Activated B cell treated with CpG ODN at 0.5 μM for 24 hours (primary cell): ENCODE measurements at regions of chr11 and their contacts with region 1.

Region 1: DNA sequence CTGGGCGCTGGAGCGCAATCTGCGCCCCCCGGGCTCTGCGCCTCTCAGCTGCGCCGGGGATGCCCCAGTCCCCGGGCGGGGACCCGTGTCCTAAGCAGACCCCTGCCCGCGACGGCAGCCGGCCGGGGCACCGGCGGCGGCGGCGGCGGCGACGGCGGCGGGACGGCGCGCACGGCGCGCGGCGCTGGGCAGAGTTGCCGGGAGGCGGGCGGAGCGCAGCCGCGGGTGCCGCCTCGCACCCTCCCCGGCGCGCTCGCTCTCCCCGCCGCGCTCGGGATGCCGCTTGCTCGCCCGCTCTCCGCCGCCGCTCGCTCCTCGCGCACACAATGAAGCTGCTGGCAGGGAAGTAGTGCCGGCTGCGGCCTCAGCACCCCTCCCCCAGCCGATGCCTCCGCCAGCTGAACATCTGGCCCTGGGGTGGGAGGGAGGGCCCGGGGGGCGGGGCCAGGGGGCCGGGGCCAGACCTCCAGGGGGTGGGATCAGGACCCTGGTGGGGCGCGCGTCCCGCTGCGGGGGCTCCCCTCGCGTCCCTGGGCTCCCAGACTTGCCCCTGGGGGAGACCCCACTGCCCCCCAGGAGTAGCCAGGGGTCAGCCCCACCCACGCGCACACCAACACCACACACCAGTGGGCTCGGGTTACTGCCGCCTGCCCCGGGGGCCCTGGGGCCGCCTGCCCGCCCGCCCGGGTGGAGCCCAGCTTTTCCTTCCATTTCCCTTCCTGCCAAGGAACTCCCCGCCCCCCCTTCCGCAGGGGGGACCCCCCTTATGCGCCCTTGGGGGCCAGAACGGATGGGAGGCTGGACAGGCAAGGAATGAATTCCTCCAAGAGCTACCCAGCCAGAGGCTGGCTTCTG is at the start of gene RCOR2:
- DNase-seq: peak; percentile 58
- ATAC-seq: peak; percentile 74
- H3K4me3 Mint-ChIP-seq: peak within 1 kb of the TSS; percentile 80
- H3K27ac Mint-ChIP-seq: no peak within 1 kb of the TSS
- H3K4me1 Mint-ChIP-seq: peaks cover 19% of the 10 kb centered on the region
- H3K27me3 Mint-ChIP-seq: peaks cover 2% of the 10 kb centered on the region
- CTCF ChIP-seq: no peak
- total RNA-seq, gene RCOR2: not detected in 2 replicates

Region 2: GRCh38 chr11:63888170-63889086 is 28.6 kb before region 1 on chr11:
- CTCF ChIA-PET with region 1: no interaction called
- POLR2A ChIA-PET with region 1: interaction called, 4 read pairs
- intact Hi-C with region 1: loop called (anchors 2 kb)
- DNase-seq: peak; percentile 44
- ATAC-seq: peak; percentile 89
- H3K4me3 Mint-ChIP-seq: peak overlapping the region; percentile 87
- H3K27ac Mint-ChIP-seq: peak overlapping the region; percentile 92
- H3K4me1 Mint-ChIP-seq: peaks cover 78% of the 10 kb centered on the region
- H3K27me3 Mint-ChIP-seq: no peaks in the 10 kb centered on the region
- CTCF ChIP-seq: no peak

Region 3: DNA sequence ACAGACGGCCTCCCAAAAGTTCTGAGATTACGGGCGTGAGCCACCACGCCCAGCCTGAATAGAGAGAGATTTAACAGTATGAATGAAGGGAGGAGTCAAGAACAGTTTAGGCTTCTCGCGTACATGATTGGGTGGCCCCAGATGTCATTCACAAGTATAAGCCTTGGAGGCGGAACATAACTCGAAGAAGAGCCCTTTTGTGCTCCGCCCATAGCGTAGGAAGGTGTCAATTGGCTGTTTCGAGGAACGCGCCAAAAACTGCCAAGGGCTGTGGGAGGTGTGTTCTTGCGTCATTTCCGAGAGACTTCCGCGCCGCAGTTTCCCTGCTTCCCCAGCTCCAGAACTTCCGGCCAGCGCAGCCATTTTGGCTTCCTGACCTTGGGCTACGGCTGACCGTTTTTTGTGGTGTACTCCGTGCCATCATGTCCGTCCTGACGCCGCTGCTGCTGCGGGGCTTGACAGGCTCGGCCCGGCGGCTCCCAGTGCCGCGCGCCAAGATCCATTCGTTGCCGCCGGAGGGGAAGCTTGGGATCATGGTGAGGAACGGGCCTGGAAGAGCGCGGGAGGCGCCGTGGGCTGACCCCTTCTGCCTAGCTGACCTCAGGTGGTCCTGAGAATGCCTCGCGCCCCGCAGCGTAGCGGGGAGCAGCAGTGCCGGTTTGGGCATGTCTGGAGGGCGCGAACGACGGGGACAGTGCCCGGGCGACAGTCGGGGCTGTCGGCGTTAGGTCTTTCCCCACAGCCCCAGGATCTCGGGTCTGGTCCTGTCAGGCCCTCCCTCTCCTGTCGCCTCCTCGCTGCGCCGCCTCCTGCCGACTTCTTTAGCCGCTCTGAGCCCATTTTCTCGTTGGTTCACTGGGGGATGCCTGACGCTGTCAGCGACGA is 57.4 kb after region 1 on chr11 and contains the start of gene COX8A:
- CTCF ChIA-PET with region 1: no interaction called
- POLR2A ChIA-PET with region 1: no interaction called
- intact Hi-C with region 1: no loop called
- DNase-seq: peak; percentile 78
- ATAC-seq: peak; percentile 99
- H3K4me3 Mint-ChIP-seq: peak within 1 kb of the TSS; percentile 100
- H3K27ac Mint-ChIP-seq: peak within 1 kb of the TSS; percentile 98
- H3K4me1 Mint-ChIP-seq: peaks cover 27% of the 10 kb centered on the region
- H3K27me3 Mint-ChIP-seq: no peaks in the 10 kb centered on the region
- CTCF ChIP-seq: no peak
- total RNA-seq, gene COX8A: 182 and 217 TPM in 2 replicates